Upper lobe of right lung (tissue), 1 donor: ENCODE measurements at regions of chr4 and their contacts with region 1.

Region 1: GRCh38 chr4:6327041-6327917 is 57.6 kb downstream of the WFS1 start:
- DNase-seq: peak; percentile 91
- ATAC-seq: peak; percentile 86
- H3K4me3 ChIP-seq: no peak overlapping the region
- H3K27ac ChIP-seq: no peak overlapping the region
- H3K4me1 ChIP-seq: peaks cover 16% of the 10 kb centered on the region
- H3K27me3 ChIP-seq: peaks cover 9% of the 10 kb centered on the region
- CTCF ChIP-seq: peak; percentile 97

Region 2: DNA sequence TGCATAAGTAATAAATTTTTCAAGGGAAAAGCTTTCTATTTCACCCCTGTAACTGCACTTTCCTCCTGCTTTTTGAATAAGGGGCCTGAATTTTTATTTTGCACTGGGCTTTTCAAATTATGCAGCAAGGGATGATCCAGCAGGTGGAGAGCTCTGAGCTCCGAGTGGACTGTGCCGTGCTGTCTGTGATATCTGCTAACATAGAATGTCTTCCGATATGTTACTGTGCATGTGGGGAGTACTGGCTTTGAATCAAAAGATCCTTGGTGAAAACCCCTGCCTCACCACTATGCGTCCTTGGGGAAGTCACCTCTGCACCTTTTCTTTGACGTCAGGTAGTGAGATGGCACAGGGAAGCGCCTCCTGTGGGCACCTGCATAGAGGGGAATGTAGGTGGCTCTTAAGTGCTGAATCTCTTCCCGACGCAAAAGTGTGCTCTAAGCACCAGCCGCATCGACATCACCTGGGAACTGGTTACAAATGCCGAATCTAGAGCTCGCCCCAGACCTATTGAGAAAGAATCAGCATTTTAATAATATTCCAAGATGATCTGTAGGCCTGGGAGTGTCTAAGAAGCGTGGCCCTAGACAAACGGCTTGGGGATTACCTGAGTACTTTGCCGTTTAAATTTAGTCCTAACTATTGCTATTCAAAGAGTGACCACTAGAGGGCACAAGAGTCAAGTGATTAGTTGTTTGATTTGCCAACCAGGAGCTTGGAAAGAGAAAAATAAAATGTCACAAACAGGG is 76.9 kb before region 1 on chr4:
- intact Hi-C with region 1: loop called (anchors 5 kb)
- DNase-seq: no peak
- ATAC-seq: peak; percentile 77
- H3K4me3 ChIP-seq: no peak overlapping the region
- H3K27ac ChIP-seq: no peak overlapping the region
- H3K4me1 ChIP-seq: no peaks in the 10 kb centered on the region
- H3K27me3 ChIP-seq: peaks cover 32% of the 10 kb centered on the region
- CTCF ChIP-seq: peak; percentile 83